SK-N-SH (cell line): ENCODE measurements at regions of chr11 and their contacts with region 1.

Region 1: GRCh38 chr11:65625628-65626342 is 10.2 kb downstream of the PCNX3 start:
- DNase-seq: peak; percentile 89
- H3K4me3 ChIP-seq: no peak overlapping the region
- H3K27ac ChIP-seq: no peak overlapping the region
- H3K4me1 ChIP-seq: no peaks in the 10 kb centered on the region
- H3K27me3 ChIP-seq: no peaks in the 10 kb centered on the region
- CTCF ChIP-seq: peak; percentile 54
- EP300 ChIP-seq: no peak
- RAD21 ChIP-seq: peak; percentile 69

Region 2: GRCh38 chr11:65606876-65607613 is 18.7 kb before region 1 on chr11:
- CTCF ChIA-PET with region 1: interaction called, 15 read pairs
- POLR2A ChIA-PET with region 1: no interaction called
- DNase-seq: peak; percentile 100
- H3K4me3 ChIP-seq: peak overlapping the region in 1 of 2 experiments; percentile 33; a peak in 2 of 4 replicates
- H3K27ac ChIP-seq: peak overlapping the region; percentile 11 to 56; a peak in 2 of 4 replicates
- H3K4me1 ChIP-seq: peaks cover 14 to 21% of the 10 kb centered on the region in 2 experiments; a peak in 2 of 4 replicates
- H3K27me3 ChIP-seq: no peaks in the 10 kb centered on the region
- CTCF ChIP-seq: no peak
- EP300 ChIP-seq: no peak
- RAD21 ChIP-seq: no peak

Region 3: GRCh38 chr11:65615229-65615941 is 10.4 kb before region 1 on chr11 and contains the start of gene PCNX3:
- CTCF ChIA-PET with region 1: interaction called, 18 read pairs
- POLR2A ChIA-PET with region 1: interaction called, 5 read pairs
- DNase-seq: peak; percentile 100
- H3K4me3 ChIP-seq: peak within 1 kb of the TSS; percentile 87 to 95
- H3K27ac ChIP-seq: peak within 1 kb of the TSS; percentile 83 to 93
- H3K4me1 ChIP-seq: peaks cover 25 to 36% of the 10 kb centered on the region in 2 experiments; a peak in 3 of 4 replicates
- H3K27me3 ChIP-seq: no peaks in the 10 kb centered on the region
- CTCF ChIP-seq: no peak
- EP300 ChIP-seq: peak in 1 of 2 experiments; percentile 39; a peak in 1 of 4 replicates
- RAD21 ChIP-seq: no peak
- polyA plus RNA-seq, gene PCNX3: 23.8 and 33.7 TPM in 2 replicates

Region 4: DNA sequence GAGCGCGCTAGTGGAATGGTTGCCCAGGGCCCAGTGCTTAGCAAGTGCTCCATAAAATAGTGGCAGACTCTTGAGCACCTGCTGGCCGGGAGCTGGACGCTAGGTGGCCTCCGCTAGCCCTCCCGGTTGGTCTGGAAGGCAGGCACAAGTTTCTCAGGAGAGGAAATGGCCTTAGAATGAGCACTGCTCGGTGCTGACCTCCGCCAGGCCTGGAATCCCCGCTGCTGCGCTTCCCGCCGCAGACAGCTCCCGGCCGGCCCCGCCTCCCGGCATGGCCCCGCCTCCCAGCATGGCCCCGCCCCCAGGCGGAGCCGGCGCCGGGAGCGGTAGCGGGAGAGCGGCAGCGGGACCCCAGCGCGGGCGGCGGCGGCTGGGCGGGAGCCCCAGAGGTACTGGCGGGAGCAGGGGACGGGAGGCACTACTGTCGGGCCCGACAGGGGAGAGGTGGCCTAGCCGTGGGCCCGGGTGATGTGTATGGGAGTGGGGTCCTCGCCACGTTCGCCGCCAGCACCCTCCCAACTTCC is 12.1 kb after region 1 on chr11 and contains the start of gene SIPA1:
- CTCF ChIA-PET with region 1: interaction called, 42 read pairs
- POLR2A ChIA-PET with region 1: interaction called, 11 read pairs
- DNase-seq: peak; percentile 96
- H3K4me3 ChIP-seq: peak within 1 kb of the TSS; percentile 81 to 89
- H3K27ac ChIP-seq: peak within 1 kb of the TSS; percentile 61 to 92; a peak in 3 of 4 replicates
- H3K4me1 ChIP-seq: peaks cover 5 to 25% of the 10 kb centered on the region in 2 experiments; a peak in 3 of 4 replicates
- H3K27me3 ChIP-seq: no peaks in the 10 kb centered on the region
- CTCF ChIP-seq: peak; percentile 56
- EP300 ChIP-seq: no peak
- RAD21 ChIP-seq: peak; percentile 56
- polyA plus RNA-seq, gene SIPA1: 15.1 and 18.7 TPM in 2 replicates

Region 5: GRCh38 chr11:65646921-65647751 is 21.4 kb after region 1 on chr11:
- CTCF ChIA-PET with region 1: interaction called, 16 read pairs
- POLR2A ChIA-PET with region 1: no interaction called
- DNase-seq: peak; percentile 94
- H3K4me3 ChIP-seq: peak overlapping the region; percentile 19 to 39; a peak in 3 of 4 replicates
- H3K27ac ChIP-seq: no peak overlapping the region; a peak in 1 of 4 replicates
- H3K4me1 ChIP-seq: peaks cover 2 to 11% of the 10 kb centered on the region in 2 experiments; a peak in 2 of 4 replicates
- H3K27me3 ChIP-seq: no peaks in the 10 kb centered on the region
- CTCF ChIP-seq: 0 out of 2 replicates have a peak, but pooled peaks have one; percentile 6
- EP300 ChIP-seq: no peak
- RAD21 ChIP-seq: no peak

Region 6: DNA sequence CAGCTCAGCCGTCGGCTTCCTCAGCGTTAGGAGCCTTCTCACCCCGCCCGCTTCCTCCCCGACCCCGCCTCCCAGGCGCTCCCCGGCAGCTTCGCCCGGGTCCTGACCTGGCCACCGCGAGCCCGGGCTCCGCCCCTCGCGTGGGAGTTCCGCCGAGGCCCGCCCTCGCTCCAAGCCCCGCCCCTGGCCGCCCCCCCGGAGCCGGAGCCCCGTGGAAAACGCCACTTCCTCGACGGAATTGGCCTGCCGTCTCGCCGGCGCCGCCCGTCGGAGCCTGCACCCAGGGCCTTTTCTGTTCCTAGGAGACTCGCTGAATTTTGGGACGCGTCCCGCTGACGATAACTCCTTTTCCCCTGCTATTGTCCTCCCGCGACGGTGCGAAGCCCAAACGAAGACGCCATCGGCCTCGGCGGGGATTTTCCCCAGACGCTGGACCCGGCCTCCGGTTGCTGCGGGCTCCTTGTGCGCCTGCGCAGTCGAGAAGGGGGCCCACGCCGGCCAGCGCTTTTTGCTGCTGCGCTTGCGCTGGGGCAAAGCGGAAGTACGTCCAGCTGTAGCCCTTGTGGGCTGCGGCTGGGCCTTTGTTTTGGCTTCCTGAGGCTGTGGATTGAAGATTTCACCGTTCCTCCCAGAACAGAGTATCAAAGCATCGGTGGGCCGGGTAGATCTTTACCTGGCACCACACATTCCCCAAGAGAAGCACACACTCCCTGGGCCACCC is 26.9 kb after region 1 on chr11:
- CTCF ChIA-PET with region 1: interaction called, 10 read pairs
- POLR2A ChIA-PET with region 1: no interaction called
- DNase-seq: peak; percentile 99
- H3K4me3 ChIP-seq: peak overlapping the region; percentile 51 to 56
- H3K27ac ChIP-seq: peak overlapping the region; percentile 92 to 98
- H3K4me1 ChIP-seq: peaks cover 11 to 24% of the 10 kb centered on the region in 2 experiments
- H3K27me3 ChIP-seq: no peaks in the 10 kb centered on the region
- CTCF ChIP-seq: no peak
- EP300 ChIP-seq: peak in 1 of 2 experiments; percentile 30; a peak in 1 of 4 replicates
- RAD21 ChIP-seq: no peak